ENCODE measurements at regions of chr4 and their contacts with region 1.

Region 1: DNA sequence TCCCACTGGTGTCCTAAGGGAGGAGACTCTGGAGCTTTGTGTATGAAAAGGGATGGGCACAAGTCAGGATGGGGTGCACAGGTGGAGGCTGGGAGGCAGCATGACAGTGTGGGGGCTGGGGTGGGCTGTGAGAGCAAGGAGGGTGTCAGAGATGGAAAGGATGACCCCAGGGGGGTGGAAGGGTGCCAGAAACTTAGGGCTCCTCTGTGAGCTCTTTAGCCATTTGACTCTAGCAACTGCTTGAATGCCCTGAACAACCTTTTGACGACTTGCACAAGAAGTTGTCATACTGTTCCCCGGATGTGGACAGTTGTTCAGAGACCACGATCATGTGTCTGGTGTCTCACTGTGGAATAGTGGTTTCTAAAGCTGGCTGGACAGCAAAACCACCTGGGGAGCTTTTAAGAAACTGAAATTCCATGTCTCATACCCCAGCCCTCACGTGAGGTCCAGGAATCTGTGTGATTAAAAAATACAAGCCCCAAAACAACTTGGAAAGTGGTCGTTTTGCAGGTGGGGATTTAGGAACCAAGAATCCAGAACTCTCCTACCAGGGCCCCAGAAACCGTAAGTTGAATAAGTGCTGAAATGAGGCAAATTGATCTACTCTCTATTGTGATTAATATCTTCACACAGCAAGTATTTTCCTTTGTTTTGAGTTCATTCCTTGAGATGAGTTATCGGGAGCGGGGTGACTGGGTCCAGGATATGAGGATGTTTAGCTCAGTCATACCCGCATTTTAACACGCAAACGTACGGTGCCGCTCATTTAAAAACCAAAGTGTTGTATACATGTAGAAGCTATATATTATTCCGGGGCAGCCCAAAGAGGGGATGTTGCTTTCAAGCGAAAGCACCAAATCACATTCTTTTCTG is 3.4 kb downstream of the RHOH start:
- DNase-seq: peak; percentile 85
- H3K4me3 Mint-ChIP-seq: peak overlapping the region; percentile 94
- H3K27ac Mint-ChIP-seq: peak overlapping the region; percentile 98
- H3K4me1 Mint-ChIP-seq: peaks cover 42% of the 10 kb centered on the region
- H3K27me3 Mint-ChIP-seq: no peaks in the 10 kb centered on the region

Region 2: DNA sequence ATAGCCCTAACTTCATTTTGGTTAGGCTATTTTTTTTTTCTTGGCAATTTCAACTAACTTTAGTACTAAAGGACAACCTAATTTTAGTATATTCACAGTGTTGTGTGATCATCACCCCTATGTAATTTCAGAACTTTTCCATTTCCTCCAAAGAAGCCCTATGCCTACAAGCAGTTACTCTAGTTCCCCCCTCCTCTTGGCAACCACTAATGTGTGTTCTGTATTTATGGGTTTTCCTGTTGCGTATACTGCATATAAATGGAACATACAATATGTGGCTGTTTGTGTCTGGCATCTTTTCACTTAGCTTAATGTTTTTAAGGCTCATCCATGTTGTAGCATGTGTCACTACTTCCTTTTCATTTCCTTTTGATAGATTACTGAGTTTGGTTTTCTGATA is 86.0 kb before region 1 on chr4:
- CTCF ChIA-PET with region 1: no interaction called
- POLR2A ChIA-PET with region 1: no interaction called
- DNase-seq: no peak
- H3K4me3 Mint-ChIP-seq: no peak overlapping the region
- H3K27ac Mint-ChIP-seq: no peak overlapping the region
- H3K4me1 Mint-ChIP-seq: peaks cover 3% of the 10 kb centered on the region
- H3K27me3 Mint-ChIP-seq: no peaks in the 10 kb centered on the region

Region 3: DNA sequence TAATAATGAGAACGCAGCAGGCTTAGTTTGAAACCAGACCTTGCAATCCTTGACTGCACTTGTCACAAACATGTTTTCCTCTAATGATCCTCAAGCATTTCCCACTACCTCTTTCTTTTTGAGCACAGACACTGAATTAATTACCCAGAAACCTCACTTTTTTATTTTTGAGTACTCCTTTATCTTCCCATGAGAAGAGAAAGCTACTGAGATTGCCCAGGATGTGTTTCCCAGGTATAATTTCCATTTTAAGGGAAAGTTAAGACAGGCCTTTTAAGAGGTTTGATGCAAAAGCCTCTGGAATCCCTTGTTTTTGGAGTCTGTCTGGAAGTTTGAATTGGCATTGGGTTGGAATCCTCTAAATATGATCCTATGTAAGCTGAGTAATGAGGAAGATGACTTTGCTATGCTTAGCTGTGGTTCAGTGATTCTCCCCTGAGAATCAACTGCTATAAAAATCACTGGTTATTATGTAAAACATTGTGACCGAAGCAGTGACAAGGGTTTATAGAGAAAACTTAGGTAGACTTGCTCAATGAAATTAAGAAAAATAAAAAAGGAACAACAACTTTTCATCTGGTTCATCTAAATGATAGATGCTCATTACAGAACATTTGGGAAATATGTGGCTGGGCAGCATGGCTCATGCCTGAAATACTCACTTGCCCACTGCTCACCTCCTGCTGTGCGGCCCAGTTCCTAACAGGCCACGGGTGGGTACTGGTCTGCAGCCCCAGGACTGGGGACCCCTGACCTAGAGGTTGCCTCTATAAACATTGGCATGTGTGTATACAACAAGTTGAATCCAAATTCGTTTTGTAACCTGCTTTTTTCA is 14.2 kb before region 1 on chr4:
- CTCF ChIA-PET with region 1: interaction called, 13 read pairs
- POLR2A ChIA-PET with region 1: interaction called, 4 read pairs
- DNase-seq: no peak
- H3K4me3 Mint-ChIP-seq: no peak overlapping the region
- H3K27ac Mint-ChIP-seq: no peak overlapping the region
- H3K4me1 Mint-ChIP-seq: peaks cover 65% of the 10 kb centered on the region
- H3K27me3 Mint-ChIP-seq: no peaks in the 10 kb centered on the region

Region 4: DNA sequence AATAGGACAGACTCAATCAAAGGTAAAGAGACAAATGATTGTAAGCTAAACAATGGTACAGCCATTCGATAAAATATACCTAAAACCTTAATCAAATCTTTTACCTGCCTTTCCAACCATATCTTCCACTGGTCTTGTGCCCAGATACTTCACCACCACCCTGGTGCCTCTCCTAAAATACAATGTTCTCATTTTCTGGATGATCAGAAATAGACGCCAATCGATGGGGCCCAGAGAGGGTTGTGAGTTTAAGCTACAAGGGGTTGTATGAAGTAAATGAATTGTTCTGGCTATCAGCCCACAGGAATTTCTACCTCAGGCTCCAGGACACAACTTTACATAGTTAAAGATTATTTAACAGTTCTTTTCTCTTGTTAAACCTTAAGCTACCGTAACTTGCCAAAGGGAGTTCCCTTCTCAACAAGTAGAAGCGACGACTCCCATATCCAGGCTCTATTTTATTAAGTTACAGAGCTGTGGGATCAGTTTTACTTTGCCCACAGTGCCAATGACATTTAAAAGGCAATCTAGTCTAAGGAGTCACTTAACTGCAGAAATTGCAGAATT is 234.0 kb after region 1 on chr4:
- CTCF ChIA-PET with region 1: no interaction called
- POLR2A ChIA-PET with region 1: no interaction called
- DNase-seq: no peak
- H3K4me3 Mint-ChIP-seq: peak overlapping the region; percentile 57
- H3K27ac Mint-ChIP-seq: peak overlapping the region; percentile 96
- H3K4me1 Mint-ChIP-seq: peaks cover 65% of the 10 kb centered on the region
- H3K27me3 Mint-ChIP-seq: no peaks in the 10 kb centered on the region

Region 5: GRCh38 chr4:40980318-40980883 is 780.2 kb after region 1 on chr4:
- CTCF ChIA-PET with region 1: no interaction called
- POLR2A ChIA-PET with region 1: no interaction called
- DNase-seq: no peak
- H3K4me3 Mint-ChIP-seq: no peak overlapping the region
- H3K27ac Mint-ChIP-seq: no peak overlapping the region
- H3K4me1 Mint-ChIP-seq: no peaks in the 10 kb centered on the region
- H3K27me3 Mint-ChIP-seq: no peaks in the 10 kb centered on the region